ENCODE measurements at regions of chr1 and their contacts with region 1.

Region 1: DNA sequence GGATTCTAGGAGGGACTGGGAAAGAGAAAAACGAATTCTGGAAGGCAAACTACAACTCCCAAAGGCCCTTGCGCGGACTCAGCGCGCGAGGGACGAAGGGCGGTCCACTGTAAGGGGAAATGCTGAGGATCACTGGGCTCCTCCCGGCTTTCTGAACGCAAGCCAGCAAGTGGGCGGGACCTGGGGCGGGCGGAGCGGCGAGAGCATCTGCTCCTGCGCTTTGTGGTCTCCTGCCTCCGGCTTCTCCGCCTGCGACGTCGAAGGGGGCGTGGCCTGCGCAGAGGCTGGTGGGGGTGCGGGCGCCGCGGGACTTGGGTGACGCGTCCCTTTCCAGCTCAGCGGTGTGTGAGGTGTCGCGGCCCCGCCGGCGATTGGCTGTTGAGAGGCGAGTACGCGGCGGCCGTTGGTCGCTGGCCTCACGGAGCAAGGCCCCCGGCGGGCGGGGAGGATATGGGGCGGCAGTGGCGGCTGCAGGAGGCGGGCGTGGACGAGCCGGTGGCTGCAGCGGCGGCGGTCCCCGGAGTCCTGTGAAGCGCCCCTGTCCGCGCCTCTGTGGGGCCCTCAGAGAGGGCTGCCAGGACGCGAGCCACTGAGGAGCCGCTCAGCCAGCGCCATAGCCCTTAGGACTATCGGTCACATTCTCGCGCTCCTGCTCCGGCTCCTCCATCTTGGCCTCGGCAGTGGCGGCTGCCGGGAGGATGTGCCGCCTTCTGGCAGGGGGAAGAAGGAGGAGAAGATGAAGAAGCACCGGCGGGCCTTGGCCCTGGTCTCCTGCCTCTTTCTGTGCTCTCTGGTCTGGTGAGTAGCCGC is at the start of gene SUCO:
- DNase-seq: peak; percentile 100
- H3K4me3 Mint-ChIP-seq: peak within 1 kb of the TSS; percentile 90
- H3K27ac Mint-ChIP-seq: peak within 1 kb of the TSS; percentile 100
- H3K4me1 Mint-ChIP-seq: peaks cover 47% of the 10 kb centered on the region
- H3K27me3 Mint-ChIP-seq: peaks cover 4% of the 10 kb centered on the region
- total RNA-seq, gene SUCO: 18.8 to 20.6 TPM

Region 2: GRCh38 chr1:171741872-171742576 is 790.9 kb before region 1 on chr1 and contains the start of gene VAMP4:
- CTCF ChIA-PET with region 1: no interaction called
- POLR2A ChIA-PET with region 1: no interaction called
- intact Hi-C with region 1: loop called (anchors 10 kb)
- DNase-seq: peak; percentile 92
- H3K4me3 Mint-ChIP-seq: peak within 1 kb of the TSS; percentile 99
- H3K27ac Mint-ChIP-seq: peak within 1 kb of the TSS; percentile 100
- H3K4me1 Mint-ChIP-seq: peaks cover 47% of the 10 kb centered on the region
- H3K27me3 Mint-ChIP-seq: no peaks in the 10 kb centered on the region
- total RNA-seq, gene VAMP4: 13.2 to 14.2 TPM

Region 3: DNA sequence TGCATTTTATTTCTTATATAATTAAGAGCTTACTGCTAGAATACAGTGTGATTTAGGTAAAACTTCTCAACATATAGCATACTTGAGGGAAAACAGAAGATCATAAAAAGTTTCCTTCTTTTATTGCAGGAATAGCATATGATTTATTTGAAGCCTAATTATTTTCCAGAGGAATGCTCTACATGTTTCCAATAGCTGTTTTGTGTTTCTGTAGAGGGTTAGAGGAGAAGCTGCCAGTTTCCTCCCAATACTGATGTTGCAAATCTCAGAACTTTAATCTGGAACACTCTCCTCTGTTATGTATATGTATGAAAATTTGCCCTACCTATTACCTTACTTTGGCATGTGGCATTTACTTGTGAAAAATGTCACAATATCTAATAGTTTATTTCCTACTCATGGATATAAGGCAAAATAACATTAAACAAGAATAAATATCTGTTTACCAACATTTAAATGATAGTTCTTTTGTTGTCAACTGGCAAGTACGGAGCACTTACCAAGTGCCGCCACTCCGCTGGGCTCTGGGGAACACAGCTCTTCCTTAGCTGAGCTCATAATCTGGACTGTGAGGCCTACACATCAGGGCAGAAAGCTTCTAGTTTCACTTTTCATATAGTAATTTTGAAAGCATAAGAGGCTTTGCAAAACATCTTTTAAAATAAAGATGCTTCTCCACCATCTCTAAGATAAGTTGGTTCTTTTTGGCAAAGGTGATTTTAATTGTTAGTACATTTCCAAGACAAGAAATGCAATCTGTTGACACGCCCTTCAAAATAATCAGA is 352.2 kb before region 1 on chr1:
- CTCF ChIA-PET with region 1: no interaction called
- POLR2A ChIA-PET with region 1: no interaction called
- intact Hi-C with region 1: loop called (anchors 10 kb)
- DNase-seq: peak; percentile 66
- H3K4me3 Mint-ChIP-seq: peak overlapping the region; percentile 74
- H3K27ac Mint-ChIP-seq: peak overlapping the region; percentile 95
- H3K4me1 Mint-ChIP-seq: peaks cover 45% of the 10 kb centered on the region
- H3K27me3 Mint-ChIP-seq: no peaks in the 10 kb centered on the region

Region 4: GRCh38 chr1:172449585-172450534 is 83.0 kb before region 1 on chr1:
- CTCF ChIA-PET with region 1: interaction called, 5 read pairs
- POLR2A ChIA-PET with region 1: interaction called, 3 read pairs
- intact Hi-C with region 1: loop called (anchors 1 kb)
- DNase-seq: peak; percentile 47
- H3K4me3 Mint-ChIP-seq: peak overlapping the region; percentile 36
- H3K27ac Mint-ChIP-seq: no peak overlapping the region
- H3K4me1 Mint-ChIP-seq: peaks cover 31% of the 10 kb centered on the region
- H3K27me3 Mint-ChIP-seq: no peaks in the 10 kb centered on the region

Region 5: GRCh38 chr1:172699111-172699510 is 166.2 kb after region 1 on chr1:
- CTCF ChIA-PET with region 1: interaction called, 3 read pairs
- POLR2A ChIA-PET with region 1: no interaction called
- intact Hi-C with region 1: loop called (anchors 1 kb)
- DNase-seq: peak; percentile 86
- H3K4me3 Mint-ChIP-seq: peak overlapping the region; percentile 14
- H3K27ac Mint-ChIP-seq: peak overlapping the region; percentile 88
- H3K4me1 Mint-ChIP-seq: peaks cover 50% of the 10 kb centered on the region
- H3K27me3 Mint-ChIP-seq: no peaks in the 10 kb centered on the region

Region 6: GRCh38 chr1:174159252-174160108 is 1626.6 kb after region 1 on chr1 and contains the start of gene RABGAP1L:
- CTCF ChIA-PET with region 1: no interaction called
- POLR2A ChIA-PET with region 1: no interaction called
- intact Hi-C with region 1: loop called (anchors 10 kb)
- DNase-seq: peak; percentile 95
- H3K4me3 Mint-ChIP-seq: peak within 1 kb of the TSS; percentile 99
- H3K27ac Mint-ChIP-seq: peak within 1 kb of the TSS; percentile 94
- H3K4me1 Mint-ChIP-seq: peaks cover 60% of the 10 kb centered on the region
- H3K27me3 Mint-ChIP-seq: no peaks in the 10 kb centered on the region
- total RNA-seq, gene RABGAP1L: 30.5 to 30.9 TPM

Measured in activated CD4-positive, alpha-beta memory T cell treated with anti-CD3 and anti-CD28 coated beads for 36 hours (primary cell).